PC-9 (cell line): ENCODE measurements at regions of chr12 and their contacts with region 1.

Region 1: DNA sequence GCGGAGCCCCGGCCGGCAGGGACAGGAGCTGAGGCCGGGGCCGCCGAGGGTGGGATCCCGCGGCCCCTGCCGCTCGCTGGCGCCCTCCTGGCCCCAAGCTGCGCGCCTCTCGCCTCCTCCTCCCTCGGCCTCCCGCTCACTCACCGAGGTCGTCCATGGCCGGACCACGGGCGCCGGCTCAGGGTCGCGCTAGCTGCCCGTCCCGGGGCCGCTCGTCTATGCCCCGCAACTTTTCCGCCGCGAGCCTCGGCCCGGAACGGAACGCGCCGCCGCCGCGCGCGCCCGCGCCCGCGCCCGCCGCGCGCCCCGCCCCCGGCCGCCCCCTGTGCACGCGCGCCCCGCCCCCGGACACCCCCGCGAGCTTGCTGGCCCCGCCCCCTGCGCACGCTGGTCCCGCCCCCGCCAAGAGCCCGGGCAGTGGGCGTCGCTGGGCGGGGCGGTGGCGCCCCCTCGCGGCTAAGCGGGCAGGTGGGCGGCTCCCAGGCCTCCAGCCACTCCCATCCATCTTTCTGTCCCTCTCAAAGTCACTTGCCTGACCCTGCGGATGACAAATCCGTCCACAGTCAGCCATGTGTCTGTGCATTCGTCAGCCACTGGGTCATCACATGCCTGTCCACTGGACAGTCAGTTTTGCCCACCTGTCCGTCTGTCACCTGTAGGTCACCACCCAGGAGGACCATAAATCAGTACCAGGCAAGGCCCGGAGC is at the start of gene PXN:
- DNase-seq: peak; percentile 52 to 92
- H3K4me3 ChIP-seq: peak within 1 kb of the TSS; percentile 76
- H3K27ac ChIP-seq: peak within 1 kb of the TSS; percentile 19
- H3K4me1 ChIP-seq: peaks cover 33% of the 10 kb centered on the region
- H3K27me3 ChIP-seq: no peaks in the 10 kb centered on the region
- CTCF ChIP-seq: peak; percentile 65
- total RNA-seq, gene PXN: 191 and 218 TPM in 2 replicates

Region 2: DNA sequence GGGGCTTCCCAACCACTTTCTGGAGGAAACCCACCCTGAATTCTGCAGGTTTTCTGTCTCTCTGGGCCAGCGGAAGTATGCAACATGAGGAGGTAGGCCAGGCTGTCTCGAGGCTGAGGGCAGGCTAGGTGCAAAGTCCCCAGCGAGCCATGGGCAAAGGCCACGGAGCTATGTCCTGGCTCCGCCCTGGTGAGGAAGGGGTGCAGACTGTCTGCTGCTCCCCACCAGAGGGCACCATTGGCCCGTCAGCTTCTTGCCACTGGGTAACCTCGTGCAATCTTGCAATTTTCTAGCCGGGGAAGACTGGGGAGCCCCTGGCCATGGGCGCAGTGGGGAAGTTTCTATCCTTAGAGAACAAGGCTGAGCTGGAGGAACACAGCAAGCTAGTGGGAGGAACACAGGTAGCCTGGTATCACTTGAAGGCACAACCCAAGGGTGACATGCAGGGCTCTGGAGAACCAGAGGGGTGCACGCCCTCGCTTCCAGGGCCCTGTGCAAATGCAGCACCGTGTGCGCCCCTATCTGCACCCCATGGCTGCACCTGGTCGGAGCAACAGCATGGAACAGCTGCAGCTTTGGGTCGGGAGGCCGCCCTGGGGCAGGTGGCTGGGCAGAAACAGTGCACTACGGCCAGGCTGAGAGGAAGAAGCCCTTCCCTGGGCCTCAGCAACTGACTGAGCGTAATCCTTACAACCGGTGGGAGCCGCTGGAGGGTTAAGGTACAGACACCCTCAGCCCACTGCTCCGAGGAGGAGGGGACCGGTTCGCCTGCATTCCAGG is 37.1 kb before region 1 on chr12:
- CTCF ChIA-PET with region 1: interaction called, 50 read pairs
- POLR2A ChIA-PET with region 1: interaction called, 83 read pairs
- intact Hi-C with region 1: loop called (anchors 1 kb)
- DNase-seq: peak; percentile 80 to 92
- H3K4me3 ChIP-seq: peak overlapping the region; percentile 54; the same call in 1 of the 2 replicates
- H3K27ac ChIP-seq: peak overlapping the region; percentile 99
- H3K4me1 ChIP-seq: peaks cover 53% of the 10 kb centered on the region
- H3K27me3 ChIP-seq: no peaks in the 10 kb centered on the region
- CTCF ChIP-seq: peak; percentile 81

Region 3: DNA sequence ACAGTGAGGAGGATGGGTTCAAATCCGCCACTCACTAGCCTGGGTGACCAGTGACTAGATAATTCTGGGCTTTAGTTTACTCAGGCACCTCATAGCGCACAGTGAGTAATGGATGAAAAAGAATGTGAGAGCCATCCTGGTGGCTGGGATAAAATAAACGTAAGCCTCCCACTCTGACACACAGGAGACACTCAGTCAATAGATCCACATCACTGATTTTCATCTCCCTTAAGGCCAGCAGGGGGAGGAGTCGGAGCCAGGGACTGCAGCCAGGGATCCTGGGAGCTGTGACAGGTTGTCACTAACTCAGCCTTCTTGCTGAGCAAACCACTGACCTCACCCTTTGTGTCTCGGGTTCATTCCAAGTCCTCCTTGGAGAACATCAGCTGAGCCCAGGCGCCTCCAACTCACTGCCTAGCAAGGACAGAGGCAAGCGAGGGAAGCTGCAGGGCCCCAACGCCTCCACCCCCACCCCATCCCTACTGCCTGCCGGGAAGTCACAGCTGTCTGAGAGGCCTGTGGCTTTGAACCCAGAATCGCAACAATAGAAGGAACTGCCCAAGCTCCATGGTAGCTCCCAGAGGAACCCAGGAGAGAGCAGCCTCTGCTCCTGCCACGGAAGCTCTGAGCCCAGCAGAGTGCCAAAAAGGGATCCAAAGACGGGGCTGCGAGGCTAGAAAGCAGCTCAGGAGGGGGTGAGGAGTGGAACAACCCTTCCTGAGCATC is 30.8 kb before region 1 on chr12:
- CTCF ChIA-PET with region 1: interaction called, 50 read pairs
- POLR2A ChIA-PET with region 1: interaction called, 83 read pairs
- intact Hi-C with region 1: loop called (anchors 1 kb)
- DNase-seq: peak; percentile 79
- H3K4me3 ChIP-seq: no peak overlapping the region
- H3K27ac ChIP-seq: peak overlapping the region; percentile 99; the same call in 1 of the 2 replicates
- H3K4me1 ChIP-seq: peaks cover 59% of the 10 kb centered on the region
- H3K27me3 ChIP-seq: no peaks in the 10 kb centered on the region
- CTCF ChIP-seq: peak; percentile 60